ENCODE measurements at regions of chr12 and their contacts with region 1.

Region 1: GRCh38 chr12:57005980-57006808 is at the start of gene ZBTB39:
- DNase-seq: no peak
- ATAC-seq: peak; percentile 82
- H3K4me3 ChIP-seq: peak within 1 kb of the TSS; percentile 93
- H3K27ac ChIP-seq: peak within 1 kb of the TSS; percentile 28; the same call in 1 of the 2 replicates
- H3K4me1 ChIP-seq: peaks cover 10% of the 10 kb centered on the region
- H3K27me3 ChIP-seq: no peaks in the 10 kb centered on the region
- CTCF ChIP-seq: peak; percentile 48 to 61 (median 58)
- EP300 ChIP-seq: no peak
- POLR2A ChIP-seq: peak; percentile 79
- RAD21 ChIP-seq: peak; percentile 26; the same call in 1 of the 2 replicates
- polyA plus RNA-seq, gene ZBTB39: 0.88 to 0.93 TPM

Region 2: DNA sequence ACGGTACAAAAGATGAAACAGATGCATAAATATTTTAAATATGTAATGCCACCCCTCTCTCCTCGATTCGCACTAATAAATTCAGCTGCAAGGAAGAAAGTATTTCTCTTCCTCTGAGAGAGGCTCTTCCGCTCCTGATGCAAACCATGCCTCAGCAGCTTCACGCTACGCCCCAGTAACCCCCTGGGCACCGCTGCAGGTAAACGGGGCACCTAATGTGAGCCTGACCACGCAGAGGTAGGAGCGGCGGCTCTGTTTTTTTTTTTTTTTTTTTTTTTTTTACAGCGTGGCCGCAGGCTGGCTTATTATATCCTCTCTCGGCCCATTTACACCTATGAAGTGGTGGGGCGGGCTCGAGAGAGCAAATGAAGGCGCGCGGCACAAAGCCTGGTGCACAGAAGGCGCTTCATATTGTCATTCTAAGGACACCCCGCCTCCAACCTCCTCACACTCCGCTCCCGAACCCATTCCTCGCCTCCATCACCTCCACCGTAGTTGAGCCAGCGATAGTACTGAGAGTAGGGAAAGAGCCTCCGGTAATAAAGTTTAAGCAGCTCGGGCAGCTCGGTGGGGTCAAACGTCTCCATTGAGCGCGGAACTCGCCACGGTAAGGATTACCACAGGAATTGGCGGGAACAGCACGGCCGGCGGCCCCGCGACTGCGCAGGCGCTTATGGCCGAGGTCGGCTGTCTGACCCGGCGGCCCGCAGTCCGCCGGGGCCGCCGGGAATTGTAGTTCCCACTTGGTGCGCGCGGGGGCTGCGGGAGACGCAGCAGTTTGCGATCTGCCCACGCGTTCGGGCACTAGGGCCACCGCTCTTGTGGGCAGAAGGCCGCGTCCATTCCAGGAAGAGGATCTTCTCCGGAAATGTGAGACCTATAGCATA is 254.2 kb before region 1 on chr12 and contains the start of gene PRIM1:
- CTCF ChIA-PET with region 1: interaction called, 177 read pairs
- POLR2A ChIA-PET with region 1: interaction called, 3 read pairs
- RAD21 ChIA-PET with region 1: interaction called, 18 read pairs
- SMC1A ChIA-PET with region 1: interaction called, 125 read pairs
- in situ Hi-C with region 1: loop called (anchors 5 kb)
- intact Hi-C with region 1: loop called (anchors 1 kb)
- DNase-seq: peak; percentile 54
- ATAC-seq: peak; percentile 87
- H3K4me3 ChIP-seq: peak within 1 kb of the TSS; percentile 82
- H3K27ac ChIP-seq: peak within 1 kb of the TSS; percentile 72
- H3K4me1 ChIP-seq: peaks cover 21% of the 10 kb centered on the region
- H3K27me3 ChIP-seq: no peaks in the 10 kb centered on the region
- CTCF ChIP-seq: no peak
- EP300 ChIP-seq: no peak
- POLR2A ChIP-seq: peak; percentile 82
- RAD21 ChIP-seq: no peak
- polyA plus RNA-seq, gene PRIM1: 54.0 to 70.6 TPM

Region 3: GRCh38 chr12:56766535-56766934 is 239.7 kb before region 1 on chr12:
- CTCF ChIA-PET with region 1: interaction called, 127 read pairs
- POLR2A ChIA-PET with region 1: no interaction called
- RAD21 ChIA-PET with region 1: interaction called, 4 read pairs
- SMC1A ChIA-PET with region 1: interaction called, 125 read pairs
- in situ Hi-C with region 1: no loop called
- intact Hi-C with region 1: no loop called
- DNase-seq: peak; percentile 70
- ATAC-seq: peak; percentile 99
- H3K4me3 ChIP-seq: no peak overlapping the region
- H3K27ac ChIP-seq: no peak overlapping the region; the same call in 1 of the 2 replicates
- H3K4me1 ChIP-seq: peaks cover 12% of the 10 kb centered on the region
- H3K27me3 ChIP-seq: no peaks in the 10 kb centered on the region
- CTCF ChIP-seq: no peak
- EP300 ChIP-seq: peak in 1 of 2 experiments; percentile 82; a peak in 2 of 4 replicates
- POLR2A ChIP-seq: no peak
- RAD21 ChIP-seq: no peak

Region 4: DNA sequence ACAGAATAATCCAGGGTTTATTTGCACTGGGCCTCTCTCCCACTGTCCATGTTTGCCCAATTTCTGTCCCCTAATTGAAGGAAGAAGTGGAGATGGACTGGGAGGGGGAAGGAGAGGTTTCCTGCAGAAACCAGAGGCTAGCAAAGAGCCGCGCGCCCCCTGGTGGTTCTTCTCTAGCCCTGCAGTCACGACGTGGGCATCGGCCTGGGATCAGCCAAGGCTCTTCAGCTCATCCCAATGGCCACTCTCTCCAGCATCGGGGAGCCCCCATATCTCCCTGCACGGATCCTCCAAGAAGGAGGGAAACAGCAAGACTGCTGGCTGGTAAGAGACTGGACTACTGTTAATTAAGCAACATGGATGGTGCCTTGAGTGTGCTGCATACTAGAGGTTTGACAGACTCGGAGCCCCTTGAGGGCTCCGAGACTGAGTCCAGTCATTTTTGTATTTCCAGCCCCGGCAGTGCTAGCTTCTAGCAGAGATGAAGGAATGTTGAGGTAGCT is 18.6 kb before region 1 on chr12:
- CTCF ChIA-PET with region 1: interaction called, 144 read pairs
- POLR2A ChIA-PET with region 1: interaction called, 3 read pairs
- RAD21 ChIA-PET with region 1: interaction called, 21 read pairs
- SMC1A ChIA-PET with region 1: interaction called, 37 read pairs
- in situ Hi-C with region 1: no loop called
- intact Hi-C with region 1: no loop called
- DNase-seq: no peak
- ATAC-seq: peak; percentile 90
- H3K4me3 ChIP-seq: no peak overlapping the region
- H3K27ac ChIP-seq: no peak overlapping the region
- H3K4me1 ChIP-seq: peaks cover 18% of the 10 kb centered on the region
- H3K27me3 ChIP-seq: no peaks in the 10 kb centered on the region
- CTCF ChIP-seq: peak; percentile 93 to 97 (median 96)
- EP300 ChIP-seq: no peak
- POLR2A ChIP-seq: no peak
- RAD21 ChIP-seq: peak; percentile 88

Region 5: DNA sequence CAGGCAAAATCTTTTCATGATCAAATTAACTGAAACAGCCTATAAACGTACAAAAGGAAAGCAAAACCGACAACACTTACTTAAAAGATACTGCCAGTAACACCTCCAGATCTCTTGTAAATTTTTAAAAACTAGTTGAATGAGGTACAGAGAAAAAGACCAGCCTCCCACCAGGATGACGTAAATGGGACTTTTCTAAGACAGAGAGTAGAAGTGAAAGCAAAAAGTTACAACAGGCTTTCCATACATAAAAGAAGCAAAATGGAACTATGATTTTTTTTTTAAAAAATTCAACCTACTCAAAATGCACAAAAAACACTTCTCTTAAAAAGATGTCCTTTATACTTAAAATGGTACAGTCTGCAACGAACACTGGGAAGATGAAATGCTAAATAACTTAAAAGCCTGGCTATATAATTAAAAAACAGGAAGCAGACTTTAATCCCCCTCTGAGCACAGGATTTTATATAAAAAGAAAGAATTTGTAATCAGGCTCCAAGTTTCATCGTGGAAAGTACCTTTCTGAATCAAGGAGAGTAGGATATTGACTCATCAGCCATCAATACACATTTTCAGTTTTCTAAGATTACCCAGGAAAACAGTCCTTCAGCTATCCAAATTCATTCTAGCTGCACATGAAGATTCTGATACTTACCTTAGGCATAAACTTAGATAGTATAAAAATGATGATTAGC is 57.9 kb after region 1 on chr12:
- CTCF ChIA-PET with region 1: interaction called, 102 read pairs
- POLR2A ChIA-PET with region 1: no interaction called
- RAD21 ChIA-PET with region 1: interaction called, 8 read pairs
- SMC1A ChIA-PET with region 1: interaction called, 37 read pairs
- in situ Hi-C with region 1: no loop called
- intact Hi-C with region 1: loop called (anchors 1 kb)
- DNase-seq: peak; percentile 69
- ATAC-seq: peak; percentile 96
- H3K4me3 ChIP-seq: peak overlapping the region; percentile 48; the same call in 1 of the 2 replicates
- H3K27ac ChIP-seq: peak overlapping the region; percentile 59
- H3K4me1 ChIP-seq: peaks cover 10% of the 10 kb centered on the region
- H3K27me3 ChIP-seq: no peaks in the 10 kb centered on the region
- CTCF ChIP-seq: no peak
- EP300 ChIP-seq: no peak
- POLR2A ChIP-seq: no peak
- RAD21 ChIP-seq: no peak

Measured in GM12878 (cell line).